Activated T-helper 2 cell treated with anti-CD3 and anti-CD28 coated beads, Interferon-gamma antibody, Interleukin-2, Interleukin-4, amounts not matched to agents 10 μg/mL and 5 μg/mL and 100 μg/mL, durations not matched to agents 14 hours and 24 hours and 36 hours (primary cell): ENCODE measurements at regions of chr4 and their contacts with region 1.

Region 1: DNA sequence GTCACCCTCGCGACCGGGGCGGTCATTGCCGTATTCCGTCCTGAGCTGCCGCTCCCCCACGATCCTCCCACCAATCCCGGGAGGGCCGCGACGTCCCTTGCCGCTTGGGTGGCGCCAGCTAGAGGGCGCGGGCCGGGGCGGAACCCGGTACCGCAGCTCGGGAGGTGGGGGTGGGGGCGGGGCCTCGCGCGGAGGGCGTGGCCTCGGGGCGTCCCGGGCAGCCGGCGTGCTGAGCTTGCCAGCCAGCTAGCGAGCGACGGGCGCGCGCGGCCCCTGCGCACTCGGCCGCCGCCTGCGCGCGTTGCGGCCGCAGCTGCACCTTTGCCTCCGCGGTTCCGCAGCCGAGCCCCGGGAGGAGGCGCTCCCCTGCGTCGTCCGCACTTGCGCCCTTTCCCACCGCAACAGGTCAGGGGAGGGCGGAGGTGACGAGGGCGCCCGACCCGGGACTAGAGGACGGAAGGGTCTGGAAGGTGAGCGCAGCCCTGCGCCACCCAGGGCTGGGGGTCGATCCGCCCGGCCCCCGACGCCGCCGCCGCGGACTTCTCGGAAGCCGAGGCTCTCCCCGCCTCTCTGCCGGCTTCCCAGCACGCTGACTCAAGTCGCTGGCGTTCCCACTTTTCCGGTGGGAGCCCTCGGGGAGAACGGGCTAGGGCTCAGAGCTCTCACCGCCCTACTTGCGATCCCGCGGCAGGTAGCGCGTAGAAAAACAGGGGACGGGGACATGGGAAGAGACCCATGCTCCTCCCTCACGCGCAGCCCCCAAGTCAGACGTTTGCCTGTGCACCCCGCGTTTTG is at the start of gene AFF1:
- DNase-seq: peak; percentile 85
- H3K4me3 Mint-ChIP-seq: peak within 1 kb of the TSS; percentile 93
- H3K27ac Mint-ChIP-seq: peak within 1 kb of the TSS; percentile 96
- H3K4me1 Mint-ChIP-seq: peaks cover 49% of the 10 kb centered on the region
- H3K27me3 Mint-ChIP-seq: no peaks in the 10 kb centered on the region
- total RNA-seq, gene AFF1: 60.4 and 63.0 TPM in 2 replicates

Region 2: GRCh38 chr4:86961605-86962295 is 26.8 kb after region 1 on chr4:
- intact Hi-C with region 1: loop called (anchors 1 kb)
- DNase-seq: no peak
- H3K4me3 Mint-ChIP-seq: peak overlapping the region; percentile 50
- H3K27ac Mint-ChIP-seq: peak overlapping the region; percentile 66
- H3K4me1 Mint-ChIP-seq: peaks cover 41% of the 10 kb centered on the region
- H3K27me3 Mint-ChIP-seq: no peaks in the 10 kb centered on the region

Region 3: DNA sequence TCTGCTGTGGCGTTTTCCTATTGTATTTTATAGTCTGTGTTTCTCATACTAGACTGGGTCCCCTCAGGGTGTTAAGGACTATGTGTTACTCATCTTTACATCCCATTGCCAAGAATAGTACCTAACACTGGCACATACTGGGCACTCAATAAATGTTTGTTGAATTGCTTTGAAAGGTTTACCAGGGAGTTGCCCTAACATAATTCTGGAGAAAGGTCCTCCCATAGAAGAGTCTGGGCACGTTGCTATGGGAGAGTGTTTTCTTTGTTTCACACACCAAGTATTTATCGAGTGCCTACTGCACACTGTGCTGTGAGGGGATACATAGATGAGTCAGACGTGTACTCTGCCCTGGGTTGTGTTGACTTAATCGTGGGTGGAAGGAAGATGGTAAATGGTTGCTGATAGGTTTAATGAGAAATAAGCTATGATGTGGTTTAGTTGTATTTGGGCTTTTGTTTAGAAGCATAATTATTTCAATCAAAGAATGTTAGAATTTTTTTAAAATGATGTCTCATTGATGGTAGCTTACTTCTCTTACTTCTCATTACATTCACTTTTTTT is 42.7 kb after region 1 on chr4:
- intact Hi-C with region 1: loop called (anchors 5 kb)
- DNase-seq: no peak
- H3K4me3 Mint-ChIP-seq: peak overlapping the region; percentile 4
- H3K27ac Mint-ChIP-seq: peak overlapping the region; percentile 73
- H3K4me1 Mint-ChIP-seq: peaks cover 54% of the 10 kb centered on the region
- H3K27me3 Mint-ChIP-seq: no peaks in the 10 kb centered on the region

Region 4: DNA sequence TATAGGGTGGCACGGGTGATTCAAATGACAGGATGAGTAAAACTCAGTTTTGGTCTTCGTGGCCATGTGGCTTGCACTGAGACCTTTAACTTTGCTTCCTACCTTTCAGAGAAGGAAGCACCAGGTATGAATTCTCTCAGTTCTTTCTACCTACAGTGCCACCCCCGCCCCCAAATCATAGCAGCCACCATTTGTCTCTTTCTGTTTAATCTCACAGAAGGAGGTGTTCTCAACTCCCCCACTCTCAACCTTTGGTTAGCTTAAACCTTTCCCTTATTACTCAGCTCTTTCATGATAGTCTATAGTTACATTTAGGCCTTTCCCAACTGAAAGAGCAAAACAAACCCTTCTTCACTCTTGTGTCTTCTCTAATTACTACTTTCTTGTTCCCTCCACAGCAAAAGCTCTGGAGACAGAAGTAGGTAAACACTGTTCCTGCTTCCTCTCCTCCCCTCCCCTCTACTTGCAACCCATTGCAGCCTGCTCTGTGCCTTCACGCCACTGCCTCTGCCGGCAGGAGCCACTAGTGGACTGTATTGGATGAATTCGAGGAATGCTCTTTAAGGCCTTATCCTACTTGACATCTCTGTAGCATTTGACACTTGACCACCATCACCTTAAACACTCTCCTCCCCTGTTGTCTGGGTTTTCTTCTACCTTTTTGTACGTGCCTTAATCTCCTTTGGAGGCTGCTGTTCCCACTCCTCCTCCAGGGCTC is 123.5 kb after region 1 on chr4:
- intact Hi-C with region 1: loop called (anchors 1 kb)
- DNase-seq: no peak
- H3K4me3 Mint-ChIP-seq: peak overlapping the region; percentile 15
- H3K27ac Mint-ChIP-seq: peak overlapping the region; percentile 80
- H3K4me1 Mint-ChIP-seq: peaks cover 48% of the 10 kb centered on the region
- H3K27me3 Mint-ChIP-seq: no peaks in the 10 kb centered on the region

Region 5: DNA sequence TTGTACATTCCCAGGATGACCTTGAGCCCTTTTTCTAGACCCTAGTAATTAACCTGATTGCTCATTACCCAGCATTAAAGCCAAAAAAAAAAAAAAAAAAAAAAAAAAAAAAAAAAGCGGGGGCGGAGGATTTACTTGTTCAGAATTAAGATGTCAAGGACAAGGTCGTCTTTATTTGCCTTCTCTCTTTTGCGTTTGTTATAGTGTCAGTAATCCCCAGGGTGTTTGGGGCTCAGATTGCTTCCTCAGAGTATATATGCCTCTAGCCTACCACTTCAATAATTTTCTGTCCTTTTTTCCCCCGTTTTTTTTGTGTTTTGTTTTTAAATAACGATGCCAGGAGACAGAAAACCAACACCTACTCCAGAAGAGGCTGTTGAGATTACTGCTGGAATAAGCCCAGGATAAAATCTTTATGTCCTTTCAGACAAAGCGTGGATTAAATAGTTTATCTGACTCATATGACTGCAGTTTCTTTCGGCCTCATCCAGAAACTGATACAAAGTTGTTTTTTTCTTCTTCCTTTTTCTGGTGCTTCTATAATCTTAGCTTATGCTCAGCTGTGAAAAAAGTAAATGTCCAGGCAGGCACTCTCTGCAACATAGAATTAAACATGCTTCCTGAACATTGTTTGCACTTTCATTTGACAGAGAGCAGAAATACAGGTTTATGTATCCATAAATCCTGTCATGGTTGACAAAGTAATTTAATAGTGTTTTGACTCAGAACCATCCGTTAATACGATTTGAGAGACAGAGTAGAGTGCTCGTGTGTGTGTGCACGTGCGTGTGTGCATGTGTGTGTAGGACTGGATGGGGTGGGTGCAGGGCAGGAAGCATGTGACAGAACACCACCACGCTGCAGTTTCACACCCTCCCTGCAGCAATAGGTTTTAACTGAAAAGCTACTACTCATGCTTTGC is 138.5 kb after region 1 on chr4:
- intact Hi-C with region 1: loop called (anchors 2 kb)
- DNase-seq: peak; percentile 46
- H3K4me3 Mint-ChIP-seq: peak overlapping the region; percentile 74
- H3K27ac Mint-ChIP-seq: peak overlapping the region; percentile 88
- H3K4me1 Mint-ChIP-seq: peaks cover 48% of the 10 kb centered on the region
- H3K27me3 Mint-ChIP-seq: no peaks in the 10 kb centered on the region

Region 6: DNA sequence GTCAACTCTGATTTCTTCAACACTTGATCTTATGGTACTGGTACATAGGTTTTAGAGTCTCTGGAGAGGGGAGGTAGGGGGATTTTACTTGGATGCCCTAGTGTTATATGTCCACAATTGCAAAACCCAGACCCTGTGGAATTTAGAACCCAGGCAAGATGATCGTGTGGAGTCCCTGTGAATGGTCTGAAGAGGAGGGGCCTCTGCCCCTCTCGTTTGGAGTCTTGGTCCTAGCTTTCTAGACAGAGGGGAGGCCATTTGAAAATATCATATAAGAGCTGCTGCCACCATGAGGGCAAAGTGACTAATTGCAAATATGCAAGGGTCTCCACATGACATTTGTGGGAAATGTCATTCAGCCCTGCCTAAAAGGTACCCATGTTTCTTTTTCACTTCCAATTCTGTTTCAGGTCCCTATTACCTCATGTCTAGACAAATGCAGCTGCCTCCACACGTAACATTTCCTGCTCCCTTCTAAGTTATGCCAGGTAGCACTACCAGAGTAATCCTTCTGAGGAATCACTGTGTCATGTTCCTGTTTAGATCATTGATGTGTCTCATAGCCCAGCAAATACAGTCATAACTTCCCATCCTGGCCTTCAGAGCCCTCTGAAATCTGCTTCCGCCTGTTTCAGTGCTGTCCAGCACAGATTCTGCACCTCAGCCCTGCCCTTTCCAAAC is 158.6 kb after region 1 on chr4:
- intact Hi-C with region 1: loop called (anchors 5 kb)
- DNase-seq: no peak
- H3K4me3 Mint-ChIP-seq: no peak overlapping the region
- H3K27ac Mint-ChIP-seq: peak overlapping the region; percentile 24
- H3K4me1 Mint-ChIP-seq: peaks cover 22% of the 10 kb centered on the region
- H3K27me3 Mint-ChIP-seq: no peaks in the 10 kb centered on the region

Region 7: GRCh38 chr4:87220094-87220822 is 285.3 kb after region 1 on chr4 and contains the start of gene KLHL8:
- intact Hi-C with region 1: loop called (anchors 1 kb)
- DNase-seq: peak; percentile 85
- H3K4me3 Mint-ChIP-seq: peak within 1 kb of the TSS; percentile 89
- H3K27ac Mint-ChIP-seq: peak within 1 kb of the TSS; percentile 82
- H3K4me1 Mint-ChIP-seq: peaks cover 19% of the 10 kb centered on the region
- H3K27me3 Mint-ChIP-seq: peaks cover 11% of the 10 kb centered on the region
- total RNA-seq, gene KLHL8: 11.6 and 12.3 TPM in 2 replicates